Right cardiac atrium (tissue), 5 donors: ENCODE measurements at regions of chr12 and their contacts with region 1.

Region 1: DNA sequence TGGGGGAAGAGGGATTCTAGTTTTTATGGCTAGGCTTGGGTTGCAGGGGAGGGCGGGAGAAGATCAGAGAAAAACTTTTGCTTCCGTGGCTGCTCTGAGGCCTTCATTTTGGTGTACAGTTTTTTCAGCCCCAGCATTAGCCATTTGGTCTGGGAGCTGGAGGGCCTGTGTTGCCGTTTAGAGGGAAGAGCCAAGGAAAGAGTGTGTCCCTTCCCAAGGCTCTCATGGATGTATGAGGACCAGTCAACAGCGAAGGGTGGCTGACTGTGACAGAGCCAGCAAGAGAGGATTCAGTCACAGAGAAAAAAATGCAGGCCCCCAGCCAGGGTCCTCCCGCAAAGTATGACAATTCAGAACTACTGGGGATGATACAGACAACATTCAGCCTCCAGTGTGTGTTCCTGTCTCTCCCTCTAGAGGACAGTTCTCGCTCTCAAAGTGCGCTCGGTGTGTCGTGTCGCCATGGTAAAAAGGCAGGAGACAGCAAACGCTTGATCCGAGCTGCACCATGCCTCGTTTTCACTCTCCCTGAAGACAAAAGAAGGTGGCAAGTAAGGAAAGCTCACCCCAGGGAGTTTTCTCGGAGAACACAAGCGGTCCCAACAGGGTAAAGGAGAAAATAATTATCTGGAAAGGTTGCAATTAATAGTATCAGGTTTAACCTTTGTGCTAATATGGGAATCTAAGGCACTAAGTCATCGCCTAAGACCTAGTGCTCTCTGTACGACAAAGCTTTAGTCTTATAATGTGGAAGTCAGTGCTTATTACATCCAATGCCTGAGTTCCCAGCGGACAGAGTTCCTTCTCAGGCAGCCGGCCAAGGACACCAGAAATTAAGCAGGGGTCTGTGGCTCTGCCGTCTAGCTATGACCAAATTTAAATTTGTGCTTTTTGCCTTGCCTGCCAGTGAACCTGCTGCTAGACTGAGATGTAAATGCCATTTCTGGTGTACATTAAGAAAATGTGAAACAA is 157.3 kb upstream of the PLXNC1 start:
- DNase-seq: peak; percentile 55 to 73 (median 64)
- ATAC-seq: peak; percentile 94 to 95
- H3K4me3 ChIP-seq: peak overlapping the region; percentile 18
- H3K27ac ChIP-seq: peak overlapping the region; percentile 36
- H3K4me1 ChIP-seq: no peaks in the 10 kb centered on the region
- H3K27me3 ChIP-seq: no peaks in the 10 kb centered on the region

Region 2: GRCh38 chr12:94074980-94075928 is 84.1 kb after region 1 on chr12:
- intact Hi-C with region 1: loop called in 1 of 4 experiments (anchors 5 kb)
- DNase-seq: peak; percentile 65 to 84 (median 84)
- ATAC-seq: peak; percentile 94 to 95
- H3K4me3 ChIP-seq: no peak overlapping the region
- H3K27ac ChIP-seq: peak overlapping the region; percentile 90
- H3K4me1 ChIP-seq: peaks cover 7% of the 10 kb centered on the region
- H3K27me3 ChIP-seq: no peaks in the 10 kb centered on the region